ENCODE measurements at regions of chr10 and their contacts with region 1.

Region 1: GRCh38 chr10:3623746-3624145 is 161.3 kb downstream of the KLF6 start:
- DNase-seq: no peak
- ATAC-seq: no peak
- H3K4me3 Mint-ChIP-seq: no peak overlapping the region
- H3K27ac Mint-ChIP-seq: peak overlapping the region; percentile 14
- H3K4me1 Mint-ChIP-seq: peaks cover 30% of the 10 kb centered on the region
- H3K27me3 Mint-ChIP-seq: no peaks in the 10 kb centered on the region

Region 2: GRCh38 chr10:3226960-3227744 is 396.6 kb before region 1 on chr10:
- CTCF ChIA-PET with region 1: no interaction called
- POLR2A ChIA-PET with region 1: no interaction called
- intact Hi-C with region 1: loop called in 1 of 2 experiments (anchors 1 kb)
- DNase-seq: no peak
- ATAC-seq: peak; percentile 18
- H3K4me3 Mint-ChIP-seq: no peak overlapping the region
- H3K27ac Mint-ChIP-seq: no peak overlapping the region
- H3K4me1 Mint-ChIP-seq: peaks cover 20% of the 10 kb centered on the region
- H3K27me3 Mint-ChIP-seq: peaks cover 8% of the 10 kb centered on the region

Region 3: GRCh38 chr10:3613318-3613717 is 10.4 kb before region 1 on chr10:
- CTCF ChIA-PET with region 1: no interaction called
- POLR2A ChIA-PET with region 1: no interaction called
- intact Hi-C with region 1: no loop called
- DNase-seq: no peak
- ATAC-seq: no peak
- H3K4me3 Mint-ChIP-seq: no peak overlapping the region
- H3K27ac Mint-ChIP-seq: no peak overlapping the region
- H3K4me1 Mint-ChIP-seq: no peaks in the 10 kb centered on the region
- H3K27me3 Mint-ChIP-seq: no peaks in the 10 kb centered on the region

Region 4: DNA sequence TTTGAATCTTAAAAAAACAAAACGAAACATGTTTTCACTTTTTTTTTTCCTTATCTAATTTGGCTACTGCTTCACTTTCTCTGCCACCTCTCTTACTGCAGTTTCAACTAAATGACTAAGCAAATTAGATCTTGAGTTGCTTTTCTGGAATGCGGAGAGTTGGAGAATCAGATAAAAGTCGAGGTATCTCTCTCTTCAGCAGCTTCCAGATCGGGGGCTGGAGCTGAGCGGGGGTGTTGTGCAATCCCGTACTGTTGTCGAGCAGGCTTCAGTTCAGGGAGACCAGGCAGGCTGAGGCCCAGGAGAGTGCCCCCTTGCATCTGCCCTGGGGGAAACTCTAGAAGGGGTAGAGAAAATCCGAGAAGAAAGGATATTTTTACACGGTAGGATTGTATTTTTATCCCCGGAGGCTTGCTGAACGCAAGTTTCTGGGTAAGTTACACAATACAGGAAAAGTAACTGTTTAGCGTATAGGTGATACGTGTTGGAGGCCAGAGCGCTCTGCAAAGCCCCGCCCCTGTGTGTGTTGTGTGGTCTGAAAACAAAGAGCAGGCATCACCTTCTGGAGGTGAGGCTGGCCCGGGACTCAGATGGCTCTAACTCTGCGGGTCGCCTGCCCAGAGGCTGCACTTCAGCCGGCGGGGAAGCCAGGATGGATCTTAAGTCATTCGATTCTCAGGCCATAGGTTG is 44.7 kb after region 1 on chr10:
- CTCF ChIA-PET with region 1: interaction called, 3 read pairs
- POLR2A ChIA-PET with region 1: no interaction called
- intact Hi-C with region 1: loop called in 1 of 2 experiments (anchors 1 kb)
- DNase-seq: peak; percentile 79
- ATAC-seq: peak; percentile 90
- H3K4me3 Mint-ChIP-seq: peak overlapping the region; percentile 67
- H3K27ac Mint-ChIP-seq: peak overlapping the region; percentile 81
- H3K4me1 Mint-ChIP-seq: peaks cover 41% of the 10 kb centered on the region
- H3K27me3 Mint-ChIP-seq: no peaks in the 10 kb centered on the region

Region 5: GRCh38 chr10:3811291-3811870 is 187.6 kb after region 1 on chr10:
- CTCF ChIA-PET with region 1: no interaction called
- POLR2A ChIA-PET with region 1: no interaction called
- intact Hi-C with region 1: loop called in 1 of 2 experiments (anchors 1 kb)
- DNase-seq: peak; percentile 78
- ATAC-seq: peak; percentile 62
- H3K4me3 Mint-ChIP-seq: peak overlapping the region; percentile 42
- H3K27ac Mint-ChIP-seq: no peak overlapping the region
- H3K4me1 Mint-ChIP-seq: peaks cover 80% of the 10 kb centered on the region
- H3K27me3 Mint-ChIP-seq: no peaks in the 10 kb centered on the region

Region 6: GRCh38 chr10:4651404-4652037 is 1027.8 kb after region 1 on chr10:
- CTCF ChIA-PET with region 1: no interaction called
- POLR2A ChIA-PET with region 1: no interaction called
- intact Hi-C with region 1: loop called in 1 of 2 experiments (anchors 1 kb)
- DNase-seq: peak; percentile 30
- ATAC-seq: peak; percentile 85
- H3K4me3 Mint-ChIP-seq: peak overlapping the region; percentile 36
- H3K27ac Mint-ChIP-seq: peak overlapping the region; percentile 90
- H3K4me1 Mint-ChIP-seq: peaks cover 37% of the 10 kb centered on the region
- H3K27me3 Mint-ChIP-seq: peaks cover 6% of the 10 kb centered on the region

Measured in activated CD4-positive, alpha-beta T cell treated with anti-CD3 and anti-CD28 coated beads for 36 hours (primary cell).